ENCODE measurements at regions of chr9 and their contacts with region 1.

Region 1: DNA sequence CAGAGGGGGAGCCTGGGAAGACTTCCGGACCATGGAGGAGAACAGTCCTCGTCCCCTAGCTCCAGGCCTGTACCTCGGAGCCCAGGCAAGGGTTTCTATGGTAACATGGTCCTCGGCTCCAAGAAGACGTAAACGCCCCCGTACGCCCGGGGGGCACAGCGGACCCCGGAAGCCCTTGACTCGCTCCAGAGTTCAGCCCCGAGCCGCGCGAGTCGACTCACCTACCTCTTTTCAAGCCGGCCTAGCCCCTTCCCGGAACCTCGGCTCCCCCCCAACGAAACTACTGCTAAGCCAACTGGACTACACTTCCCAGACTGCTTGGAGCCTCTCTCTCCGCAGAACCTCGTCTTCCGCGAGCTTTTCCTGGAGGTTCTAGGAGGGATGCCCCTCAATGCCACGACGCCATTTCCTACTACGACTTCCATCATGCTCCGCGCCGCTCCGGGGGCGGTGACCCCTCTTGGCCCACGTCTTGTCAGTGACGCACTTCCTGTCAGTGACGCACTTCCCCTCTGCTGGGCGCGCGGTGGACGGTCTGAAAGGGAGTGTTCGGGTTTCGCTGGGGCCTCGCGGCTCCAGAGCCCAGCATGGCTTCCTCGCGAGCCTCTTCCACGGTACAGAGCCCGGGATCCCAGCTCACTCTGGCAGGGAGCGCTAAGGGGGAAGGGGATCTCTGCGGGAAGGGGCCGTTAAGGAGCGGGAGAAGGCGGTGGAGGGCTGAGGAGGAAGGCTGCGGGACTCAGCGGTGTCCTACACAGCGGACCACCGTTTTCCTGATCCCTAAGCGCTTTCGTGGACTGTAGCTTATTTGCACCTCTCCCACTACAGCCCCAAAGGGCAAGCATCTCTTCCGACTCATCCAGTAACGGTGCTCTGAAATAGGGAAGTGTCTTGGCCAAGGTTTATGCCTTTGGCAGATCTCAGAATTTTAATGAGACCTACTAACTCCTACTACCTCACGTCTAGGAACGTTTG is at the starts of genes CDC26 and PRPF4:
- DNase-seq: peak; percentile 97
- CTCF ChIP-seq: no peak

Region 2: GRCh38 chr9:113205432-113205831 is 70.0 kb before region 1 on chr9:
- CTCF ChIA-PET with region 1: no interaction called
- POLR2A ChIA-PET with region 1: no interaction called
- DNase-seq: no peak
- CTCF ChIP-seq: no peak

Region 3: DNA sequence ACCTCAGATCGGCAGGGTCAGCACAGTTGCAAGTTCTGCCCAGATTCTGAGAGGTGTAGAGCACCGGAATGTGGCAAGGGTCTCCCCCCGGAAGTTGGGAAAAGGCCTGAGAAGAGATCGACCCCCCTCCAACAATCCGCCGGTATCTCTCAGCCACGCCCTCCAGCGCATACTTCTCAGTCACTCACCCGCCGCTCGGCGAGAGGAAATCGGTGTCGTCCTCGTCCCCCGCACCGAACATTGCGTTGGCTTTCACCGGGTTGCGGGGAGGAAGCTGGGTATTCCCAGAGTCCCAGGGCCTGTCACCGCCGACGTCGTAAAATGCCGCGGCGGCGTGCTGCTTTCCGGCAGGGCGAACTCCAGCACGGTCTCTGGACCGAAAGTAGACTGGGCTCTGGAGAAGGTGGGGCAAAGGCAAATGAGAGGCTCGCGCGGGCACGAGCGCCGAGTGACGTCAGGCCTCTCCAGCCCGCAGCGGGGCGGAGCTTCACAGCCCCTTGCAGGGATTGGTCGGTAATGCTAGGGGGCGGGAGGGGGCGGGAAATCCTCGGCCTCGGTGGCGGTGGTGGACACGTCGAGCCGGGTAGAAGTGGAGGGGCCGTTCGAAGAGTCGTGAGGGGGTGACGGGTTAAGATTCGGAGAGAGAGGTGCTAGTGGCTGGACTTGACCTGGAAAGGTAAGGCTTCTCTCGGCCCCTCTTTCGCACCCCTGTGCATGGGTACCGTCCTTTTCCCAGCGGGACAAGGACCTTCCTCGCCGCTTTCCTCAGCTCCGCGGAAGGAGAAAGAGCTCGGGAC is 54.2 kb before region 1 on chr9 and contains the starts of genes FKBP15 and SLC31A1:
- CTCF ChIA-PET with region 1: interaction called, 26 read pairs
- POLR2A ChIA-PET with region 1: interaction called, 3 read pairs
- DNase-seq: peak; percentile 97
- CTCF ChIP-seq: no peak

Region 4: GRCh38 chr9:113231701-113232100 is 43.7 kb before region 1 on chr9:
- CTCF ChIA-PET with region 1: interaction called, 10 read pairs
- POLR2A ChIA-PET with region 1: no interaction called
- DNase-seq: no peak
- CTCF ChIP-seq: no peak

Region 5: DNA sequence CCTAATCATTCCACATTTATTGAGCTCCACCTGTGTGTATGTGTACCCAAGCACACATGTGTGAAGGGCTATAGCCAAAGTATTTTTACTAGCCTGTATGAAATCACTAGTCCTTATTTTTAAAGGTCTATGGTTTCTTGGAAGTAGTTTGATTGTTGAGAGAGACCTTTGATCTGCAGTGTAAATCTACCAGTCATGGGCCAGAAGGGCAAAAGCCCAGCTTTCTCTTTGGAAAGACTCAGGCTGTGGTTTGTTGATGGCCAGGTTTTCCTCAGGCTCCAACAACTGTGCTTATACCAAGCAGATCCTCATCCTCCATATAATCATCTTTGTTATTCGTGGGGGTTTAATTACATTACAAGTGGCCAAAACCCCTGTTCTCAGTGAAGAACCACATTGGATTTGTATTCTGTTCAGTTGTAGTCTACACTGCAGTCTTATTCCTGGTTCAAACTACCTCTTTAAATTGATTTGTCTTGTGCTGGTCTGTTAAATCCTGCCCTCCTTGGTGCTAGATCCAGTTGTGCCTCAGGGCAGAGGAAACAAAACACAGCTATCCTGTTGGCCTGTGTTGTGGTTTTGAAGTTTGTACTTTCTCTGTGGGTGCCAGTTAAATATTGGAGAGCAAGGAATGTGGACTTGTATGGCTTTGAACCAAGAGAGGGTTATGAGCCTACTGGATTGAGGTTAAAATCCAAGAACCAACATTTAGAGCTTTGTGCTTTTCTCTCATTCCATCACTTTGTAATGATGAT is 13.3 kb before region 1 on chr9:
- CTCF ChIA-PET with region 1: interaction called, 79 read pairs
- POLR2A ChIA-PET with region 1: interaction called, 11 read pairs
- DNase-seq: no peak
- CTCF ChIP-seq: no peak

Region 6: GRCh38 chr9:113349445-113350094 is 74.1 kb after region 1 on chr9 and contains the start of gene BSPRY:
- CTCF ChIA-PET with region 1: interaction called, 21 read pairs
- POLR2A ChIA-PET with region 1: interaction called, 3 read pairs
- DNase-seq: peak; percentile 62
- CTCF ChIP-seq: no peak

Region 7: DNA sequence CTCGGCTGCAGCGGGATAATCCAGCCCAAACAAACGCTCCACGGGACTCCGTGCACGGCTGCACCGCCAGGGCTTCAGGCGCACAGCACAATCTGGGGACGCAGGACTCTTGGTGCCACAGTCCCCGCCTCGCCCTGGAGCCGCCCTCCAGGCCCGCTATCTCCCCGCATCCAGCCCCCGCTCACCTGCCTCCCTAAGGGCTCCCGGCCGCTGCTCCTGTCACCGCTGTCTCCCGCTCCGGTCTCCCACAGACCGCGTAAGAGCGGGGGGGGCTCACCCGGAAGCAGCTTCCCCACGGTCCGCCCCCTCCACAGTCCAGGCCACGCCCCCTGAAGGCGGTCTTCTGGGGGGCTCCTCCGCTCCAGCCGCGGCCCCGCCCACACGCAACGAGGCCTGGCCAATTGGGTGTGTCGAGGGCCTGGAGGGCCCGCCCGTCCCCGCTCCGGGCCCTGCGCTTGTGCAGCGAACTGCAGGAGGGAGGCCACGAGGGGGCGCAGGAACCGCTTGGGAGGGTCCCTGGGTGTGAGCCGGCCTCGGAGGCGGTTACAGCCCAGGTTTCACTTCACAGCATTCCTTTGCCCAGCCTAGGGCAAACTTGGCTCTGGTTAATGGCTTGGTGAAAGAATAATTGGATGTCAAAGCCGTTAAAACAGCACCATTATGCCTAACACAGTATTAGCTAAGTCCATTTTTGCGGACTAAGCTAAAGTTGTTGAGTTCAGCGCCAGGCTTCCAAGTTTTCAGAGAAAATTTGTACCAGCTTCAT is 125.8 kb after region 1 on chr9 and contains the start of gene ALAD:
- CTCF ChIA-PET with region 1: interaction called, 96 read pairs
- POLR2A ChIA-PET with region 1: no interaction called
- DNase-seq: peak; percentile 100
- CTCF ChIP-seq: peak; percentile 93

Region 8: GRCh38 chr9:113578882-113579282 is 303.4 kb after region 1 on chr9:
- CTCF ChIA-PET with region 1: interaction called, 12 read pairs
- POLR2A ChIA-PET with region 1: no interaction called
- DNase-seq: peak; percentile 87
- CTCF ChIP-seq: no peak

Measured in GM10248 (cell line).